ENCODE measurements at regions of chr6 and their contacts with region 1.

Region 1: DNA sequence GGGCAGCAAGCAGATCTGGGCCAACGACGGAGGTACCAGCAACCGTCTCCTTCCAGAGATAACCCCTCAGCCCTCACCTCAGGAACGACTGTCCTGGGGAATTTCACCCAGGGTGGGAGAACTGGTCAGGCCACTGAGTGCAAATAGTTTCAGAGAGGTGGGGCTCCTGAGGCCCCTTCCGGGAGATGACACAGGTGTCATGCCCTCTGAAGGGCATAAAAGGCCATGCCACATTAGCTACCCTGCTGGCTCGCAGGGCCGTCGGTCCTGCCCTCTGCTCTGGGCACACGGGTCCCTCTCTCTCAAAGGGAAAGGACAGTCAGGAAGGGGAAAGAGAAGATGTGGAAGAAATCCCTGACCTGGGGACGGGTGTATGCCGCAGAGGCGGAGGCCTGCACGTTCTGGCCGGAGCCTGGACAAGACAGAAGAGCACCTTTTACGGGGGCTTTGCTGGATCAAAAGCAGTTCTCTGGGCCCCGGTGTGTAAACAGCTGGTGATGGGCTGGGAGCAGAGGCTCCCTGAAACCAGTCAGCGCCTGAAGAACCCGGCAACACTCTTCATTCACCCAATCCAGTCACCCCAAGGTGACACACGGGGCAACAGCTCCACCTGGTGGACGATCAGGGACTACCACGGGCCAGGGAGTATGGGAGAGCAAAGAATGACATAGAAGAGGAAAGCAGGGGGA is 6.4 kb upstream of the TAF8 start:
- DNase-seq: peak; percentile 98
- H3K4me3 Mint-ChIP-seq: peak overlapping the region; percentile 73
- H3K27ac Mint-ChIP-seq: peak overlapping the region; percentile 74
- H3K4me1 Mint-ChIP-seq: peaks cover 84% of the 10 kb centered on the region
- H3K27me3 Mint-ChIP-seq: no peaks in the 10 kb centered on the region

Region 2: GRCh38 chr6:41779793-41780545 is 264.0 kb before region 1 on chr6 and contains the start of gene FRS3:
- intact Hi-C with region 1: loop called (anchors 1 kb)
- DNase-seq: peak; percentile 100
- H3K4me3 Mint-ChIP-seq: peak within 1 kb of the TSS; percentile 96
- H3K27ac Mint-ChIP-seq: peak within 1 kb of the TSS; percentile 81
- H3K4me1 Mint-ChIP-seq: peaks cover 22% of the 10 kb centered on the region
- H3K27me3 Mint-ChIP-seq: peaks cover 19% of the 10 kb centered on the region
- total RNA-seq, gene FRS3: 4.7 and 6.8 TPM in 2 replicates

Region 3: GRCh38 chr6:41846666-41847237 is 197.2 kb before region 1 on chr6:
- intact Hi-C with region 1: loop called (anchors 1 kb)
- DNase-seq: peak; percentile 90
- H3K4me3 Mint-ChIP-seq: no peak overlapping the region
- H3K27ac Mint-ChIP-seq: no peak overlapping the region
- H3K4me1 Mint-ChIP-seq: peaks cover 10% of the 10 kb centered on the region
- H3K27me3 Mint-ChIP-seq: no peaks in the 10 kb centered on the region

Region 4: DNA sequence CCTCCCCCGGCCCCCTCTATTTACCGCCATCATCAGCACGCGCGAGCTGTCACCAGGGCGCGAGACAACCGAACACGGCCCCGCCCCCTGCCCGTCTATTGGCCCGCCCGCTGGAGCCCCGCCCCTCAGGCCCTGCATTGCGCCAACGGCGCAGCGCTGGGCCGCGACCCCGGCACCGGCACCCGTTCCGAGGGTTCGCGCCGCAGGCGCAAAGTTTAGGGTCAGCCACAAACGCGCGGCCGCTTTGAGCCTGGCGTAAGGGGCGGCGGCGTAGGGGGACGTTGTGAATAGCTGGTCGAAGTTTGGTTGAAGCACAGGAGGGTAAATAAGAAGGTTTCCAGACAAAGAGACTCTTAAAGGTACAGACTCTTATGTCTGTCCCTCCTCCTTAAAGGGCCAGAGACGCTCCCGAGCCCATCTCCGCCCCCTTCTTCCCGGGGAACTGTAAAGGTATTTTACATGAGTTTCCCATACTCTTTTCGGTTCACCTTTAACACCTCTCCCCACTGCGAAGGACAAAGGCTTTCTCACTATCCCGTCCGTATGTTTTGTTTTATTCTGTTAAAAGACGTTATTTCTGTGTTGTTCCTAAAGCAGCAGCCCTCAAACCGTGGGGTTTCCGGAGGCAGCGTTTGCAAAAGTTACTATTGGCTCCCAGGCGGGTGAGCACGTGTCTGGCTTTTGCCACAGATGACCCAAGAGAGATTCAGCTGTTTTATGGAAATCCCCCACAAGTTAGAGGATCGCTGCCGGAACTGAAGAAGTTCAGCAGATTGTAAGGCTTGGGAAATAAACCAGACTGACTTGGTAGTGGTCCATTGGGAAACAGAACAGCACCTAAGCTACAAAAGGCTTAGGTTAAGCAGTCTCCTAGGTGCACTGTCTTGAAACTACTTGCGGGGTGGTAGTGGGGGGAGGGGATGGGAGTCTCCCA is 148.4 kb before region 1 on chr6 and contains the start of gene USP49:
- intact Hi-C with region 1: loop called (anchors 2 kb)
- DNase-seq: peak; percentile 97
- H3K4me3 Mint-ChIP-seq: no peak within 1 kb of the TSS
- H3K27ac Mint-ChIP-seq: peak within 1 kb of the TSS; percentile 90
- H3K4me1 Mint-ChIP-seq: peaks cover 12% of the 10 kb centered on the region
- H3K27me3 Mint-ChIP-seq: peaks cover 4% of the 10 kb centered on the region
- total RNA-seq, gene USP49: 5.8 and 6.3 TPM in 2 replicates

Region 5: GRCh38 chr6:41901882-41902519 is 141.9 kb before region 1 on chr6:
- intact Hi-C with region 1: loop called (anchors 1 kb)
- DNase-seq: peak; percentile 87
- H3K4me3 Mint-ChIP-seq: no peak overlapping the region
- H3K27ac Mint-ChIP-seq: no peak overlapping the region
- H3K4me1 Mint-ChIP-seq: peaks cover 18% of the 10 kb centered on the region
- H3K27me3 Mint-ChIP-seq: no peaks in the 10 kb centered on the region

Region 6: DNA sequence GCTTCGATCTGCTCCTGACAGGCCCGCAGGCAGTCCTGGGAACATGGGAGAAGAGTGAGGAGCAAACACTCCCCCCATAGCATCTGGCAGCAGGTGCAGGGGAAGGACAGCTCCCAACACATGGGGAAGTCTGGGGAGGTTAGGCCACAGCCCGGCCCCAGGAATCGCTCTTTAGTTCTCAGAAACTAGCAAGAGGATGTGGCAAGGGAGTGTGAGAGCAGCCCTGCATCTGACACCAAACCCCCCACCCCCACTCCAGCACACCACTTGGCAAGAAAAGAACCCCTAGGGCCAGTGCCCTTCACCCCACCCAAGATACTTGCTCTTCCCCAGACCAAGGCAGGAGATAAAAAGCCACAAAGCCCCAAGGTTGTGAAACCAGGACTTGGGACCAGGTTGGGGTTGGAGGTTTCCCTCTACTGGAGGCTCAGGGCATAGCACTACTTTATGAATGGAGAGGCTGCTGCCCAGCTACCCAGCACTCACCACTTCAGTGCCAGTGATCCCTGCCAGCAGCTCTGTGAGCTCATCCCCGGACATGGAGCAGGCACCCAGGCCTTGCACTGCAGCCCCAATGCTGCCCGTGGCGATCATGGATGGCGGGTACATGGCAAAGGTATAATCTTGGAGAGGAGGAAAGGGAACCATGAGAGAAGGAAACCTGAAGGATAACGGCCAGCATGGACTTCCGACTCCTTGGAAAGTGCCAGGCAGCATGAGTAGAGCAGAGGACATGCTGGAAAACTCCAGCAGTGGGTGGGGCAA is 107.7 kb before region 1 on chr6:
- intact Hi-C with region 1: loop called (anchors 1 kb)
- DNase-seq: peak; percentile 96
- H3K4me3 Mint-ChIP-seq: peak overlapping the region; percentile 100
- H3K27ac Mint-ChIP-seq: peak overlapping the region; percentile 87
- H3K4me1 Mint-ChIP-seq: peaks cover 68% of the 10 kb centered on the region
- H3K27me3 Mint-ChIP-seq: no peaks in the 10 kb centered on the region

Region 7: GRCh38 chr6:42009966-42010891 is 33.7 kb before region 1 on chr6:
- intact Hi-C with region 1: loop called (anchors 5 kb)
- DNase-seq: peak; percentile 77
- H3K4me3 Mint-ChIP-seq: peak overlapping the region; percentile 72
- H3K27ac Mint-ChIP-seq: peak overlapping the region; percentile 90
- H3K4me1 Mint-ChIP-seq: peaks cover 62% of the 10 kb centered on the region
- H3K27me3 Mint-ChIP-seq: no peaks in the 10 kb centered on the region

Region 8: DNA sequence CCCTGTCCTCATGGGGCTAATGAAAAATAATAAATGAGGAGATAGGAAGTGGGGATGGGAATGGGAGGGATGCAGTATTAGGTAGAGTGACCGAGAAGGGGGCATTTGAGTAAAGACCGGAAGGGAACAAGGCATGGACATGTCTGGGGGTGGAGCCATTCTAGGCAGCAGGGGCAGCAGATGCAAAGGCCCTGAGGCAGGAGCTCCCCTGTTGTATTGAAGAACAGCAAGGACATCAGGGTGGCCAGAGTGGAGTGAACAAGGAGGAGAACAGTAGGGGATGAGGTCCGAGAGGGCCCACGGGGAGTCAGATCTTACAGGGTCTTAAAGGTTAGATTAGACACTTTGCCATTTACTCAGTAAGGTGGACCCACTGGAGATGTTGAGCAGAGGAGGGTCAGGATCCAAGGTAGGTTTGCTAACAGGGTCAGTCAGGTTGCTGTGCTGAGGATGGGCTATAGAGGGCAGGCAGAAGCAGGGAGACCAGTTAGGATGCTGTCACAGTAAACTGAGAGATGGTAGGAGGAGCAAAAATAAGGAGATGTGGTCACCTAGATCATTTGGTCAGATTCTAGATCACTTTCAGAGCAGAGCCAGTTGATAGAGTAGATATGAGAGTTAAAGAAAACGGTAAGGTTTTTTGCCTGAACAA is 25.1 kb after region 1 on chr6:
- intact Hi-C with region 1: no loop called
- DNase-seq: no peak
- H3K4me3 Mint-ChIP-seq: no peak overlapping the region
- H3K27ac Mint-ChIP-seq: no peak overlapping the region
- H3K4me1 Mint-ChIP-seq: peaks cover 7% of the 10 kb centered on the region
- H3K27me3 Mint-ChIP-seq: no peaks in the 10 kb centered on the region